ENCODE measurements at regions of chr2 and their contacts with region 1.

Region 1: DNA sequence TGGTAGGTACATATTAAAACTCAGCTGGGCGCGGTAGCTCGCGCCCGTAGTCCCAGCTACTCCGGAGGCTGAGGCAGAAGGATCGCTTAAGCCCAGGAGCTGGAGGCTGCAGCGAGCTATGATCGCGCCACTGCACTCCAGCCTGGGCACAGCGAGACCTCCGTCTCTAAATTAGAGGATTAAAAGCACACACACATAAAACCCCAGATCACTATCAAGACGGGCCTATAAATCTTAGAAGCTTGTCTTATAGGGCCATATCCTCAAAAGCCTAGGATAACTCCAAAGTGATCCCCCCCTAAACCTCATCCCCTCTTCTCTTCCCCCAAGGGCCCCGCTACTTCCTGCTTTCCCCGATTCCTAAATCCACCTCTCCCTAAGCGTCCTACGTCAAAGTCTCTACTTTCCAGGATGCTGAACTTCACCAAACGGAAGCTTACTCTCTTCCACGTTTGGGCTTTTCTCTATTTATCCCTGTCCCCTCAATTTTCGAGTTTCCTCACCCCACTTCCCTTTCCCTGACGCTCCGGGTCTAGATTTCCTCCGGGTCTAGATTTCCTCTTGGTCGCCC is 698 bp downstream of the KRCC1 start:
- DNase-seq: peak; percentile 19
- H3K4me3 ChIP-seq: peak overlapping the region; percentile 83
- H3K27ac ChIP-seq: peak overlapping the region; percentile 63
- H3K4me1 ChIP-seq: peaks cover 27% of the 10 kb centered on the region
- CTCF ChIP-seq: no peak

Region 2: DNA sequence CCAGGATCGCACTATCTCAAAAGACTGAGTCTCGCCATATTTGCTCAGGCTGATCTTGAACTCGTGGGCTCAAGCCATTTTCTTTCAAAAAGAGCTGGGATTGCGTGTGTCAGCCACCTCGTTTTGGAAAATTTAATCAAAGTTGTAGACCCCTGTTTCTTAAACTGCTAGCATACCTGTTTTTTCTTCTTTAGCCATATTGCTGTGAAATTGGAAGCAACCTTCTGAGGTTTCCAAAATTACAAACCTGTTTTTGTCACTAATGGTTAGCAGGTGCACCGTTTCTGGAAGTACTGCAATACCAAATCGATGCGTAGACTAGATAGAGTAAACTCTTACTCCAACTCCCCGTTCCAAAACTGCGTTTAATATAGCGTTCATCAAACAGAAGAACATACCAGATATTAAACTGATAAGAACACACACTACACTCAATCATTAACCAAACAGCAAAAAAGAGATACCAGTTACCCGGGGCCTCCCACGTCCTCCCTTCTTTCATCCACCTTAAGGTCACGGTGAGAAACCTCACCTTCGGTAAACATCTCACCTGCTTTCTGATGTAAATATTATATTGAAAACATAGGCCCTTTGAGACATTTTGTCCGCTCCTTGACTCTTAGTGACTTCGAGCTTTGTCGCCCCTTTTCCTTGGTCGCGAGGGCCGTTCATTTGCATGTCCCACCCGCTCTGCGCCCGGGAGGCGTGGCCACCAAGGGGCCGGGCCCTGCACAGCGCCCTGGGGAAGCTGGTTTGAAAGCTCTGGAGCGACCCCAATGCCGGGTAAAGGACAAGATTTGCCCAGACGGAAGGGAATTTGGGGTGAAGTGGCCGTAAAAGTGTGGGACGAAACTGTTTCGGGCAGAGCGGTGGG is 38.6 kb before region 1 on chr2 and contains the start of gene RNU2-63P:
- CTCF ChIA-PET with region 1: no interaction called
- POLR2A ChIA-PET with region 1: interaction called, 7 read pairs
- intact Hi-C with region 1: loop called (anchors 5 kb)
- DNase-seq: peak; percentile 86
- H3K4me3 ChIP-seq: peak within 1 kb of the TSS; percentile 69
- H3K27ac ChIP-seq: peak within 1 kb of the TSS; percentile 66
- H3K4me1 ChIP-seq: peaks cover 15% of the 10 kb centered on the region
- CTCF ChIP-seq: no peak
- total RNA-seq, gene RNU2-63P: 97.4 and 246 TPM in 2 replicates

Region 3: DNA sequence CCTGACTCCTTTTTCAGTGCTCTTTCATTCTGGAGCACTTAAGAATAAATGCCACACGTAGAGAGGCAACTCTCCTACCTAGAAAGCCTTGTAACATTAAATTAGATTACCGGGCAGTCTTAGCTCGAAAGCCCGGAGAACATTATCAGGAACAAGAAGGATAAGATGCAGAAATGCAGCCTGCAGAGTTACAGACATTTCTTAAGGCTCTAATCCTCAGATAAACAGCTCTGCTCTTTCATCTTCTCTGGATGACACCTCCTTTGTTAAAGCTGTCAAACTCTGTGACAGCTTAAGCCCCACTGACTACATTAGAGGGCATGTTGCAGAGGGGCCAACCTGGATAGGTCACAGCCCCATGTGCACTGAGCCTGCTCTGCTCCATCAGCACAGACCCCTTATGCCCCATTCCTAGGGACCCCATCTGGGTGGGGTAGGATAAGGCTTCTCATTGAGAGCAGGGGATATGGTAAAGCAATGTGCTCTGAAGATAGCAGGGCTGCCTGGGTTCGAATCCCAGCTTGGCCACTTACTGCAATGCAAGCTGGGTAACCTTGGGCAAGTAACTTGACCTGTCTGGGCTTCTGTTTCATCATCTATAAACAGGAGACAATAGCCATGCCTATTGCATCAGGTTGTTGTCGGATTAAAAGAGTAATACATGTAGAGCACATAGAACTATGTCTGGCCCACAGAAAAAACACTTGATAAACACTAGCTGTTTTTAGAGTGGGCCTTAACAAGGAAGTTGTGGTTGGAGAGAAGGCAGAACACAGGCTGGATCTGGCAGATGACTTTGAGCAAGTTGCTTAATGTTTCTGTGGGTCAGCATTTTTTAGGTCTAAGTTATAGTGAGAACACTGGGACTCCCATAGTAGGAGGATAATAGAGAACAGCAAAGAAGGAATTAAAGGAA is 226.7 kb after region 1 on chr2:
- CTCF ChIA-PET with region 1: no interaction called
- POLR2A ChIA-PET with region 1: no interaction called
- intact Hi-C with region 1: no loop called
- DNase-seq: no peak
- H3K4me3 ChIP-seq: no peak overlapping the region
- H3K27ac ChIP-seq: no peak overlapping the region
- H3K4me1 ChIP-seq: no peaks in the 10 kb centered on the region
- CTCF ChIP-seq: no peak